AG04449 (cell line): ENCODE measurements at regions of chr6 and their contacts with region 1.

Region 1: GRCh38 chr6:27809939-27810767 is 102.0 kb downstream of the OR2B2 start:
- DNase-seq: peak; percentile 91
- H3K4me3 ChIP-seq: peak overlapping the region; percentile 85
- CTCF ChIP-seq: peak; percentile 29

Region 2: GRCh38 chr6:27687154-27688013 is 122.8 kb before region 1 on chr6:
- CTCF ChIA-PET with region 1: no interaction called
- POLR2A ChIA-PET with region 1: no interaction called
- DNase-seq: no peak
- H3K4me3 ChIP-seq: peak overlapping the region; percentile 77
- CTCF ChIP-seq: peak; percentile 84

Region 3: GRCh38 chr6:27825025-27825793 is 15.1 kb after region 1 on chr6:
- CTCF ChIA-PET with region 1: interaction called, 22 read pairs
- POLR2A ChIA-PET with region 1: interaction called, 12 read pairs
- DNase-seq: no peak
- H3K4me3 ChIP-seq: peak overlapping the region; percentile 66
- CTCF ChIP-seq: no peak

Region 4: DNA sequence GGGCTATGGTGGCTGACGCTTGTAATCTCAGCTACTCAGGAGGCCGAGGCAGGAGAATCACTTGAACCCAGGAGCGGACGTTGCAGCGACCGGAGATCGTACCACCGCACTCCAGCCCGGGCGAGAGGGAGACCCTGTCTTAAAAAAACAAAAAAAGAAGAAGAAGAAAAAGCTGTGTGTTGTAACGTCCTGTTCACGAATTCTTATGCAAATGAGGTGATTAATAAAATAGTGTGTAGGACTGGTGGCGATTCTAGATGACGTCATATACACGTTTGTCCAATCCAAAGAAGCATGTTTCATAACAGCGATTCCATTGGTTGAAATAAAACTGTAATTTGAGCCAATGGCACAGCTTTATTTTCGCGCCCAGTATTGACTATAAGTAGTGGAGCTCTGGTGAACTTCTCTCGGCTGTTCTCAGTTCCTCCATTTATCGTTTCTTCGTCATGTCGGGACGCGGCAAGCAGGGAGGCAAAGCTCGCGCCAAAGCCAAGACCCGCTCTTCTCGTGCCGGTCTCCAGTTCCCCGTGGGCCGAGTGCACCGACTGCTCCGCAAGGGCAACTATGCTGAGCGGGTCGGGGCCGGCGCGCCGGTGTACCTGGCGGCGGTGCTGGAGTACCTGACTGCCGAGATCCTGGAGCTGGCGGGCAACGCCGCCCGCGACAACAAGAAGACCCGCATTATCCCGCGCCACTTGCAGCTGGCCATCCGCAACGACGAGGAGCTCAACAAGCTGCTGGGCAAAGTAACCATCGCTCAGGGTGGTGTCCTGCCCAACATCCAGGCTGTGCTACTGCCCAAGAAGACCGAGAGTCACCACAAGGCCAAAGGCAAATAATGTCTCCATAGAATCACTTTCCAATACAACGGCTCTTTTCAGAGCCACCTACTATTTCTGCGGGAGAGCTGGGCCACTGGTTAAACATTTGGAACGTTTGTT is 55.0 kb after region 1 on chr6:
- CTCF ChIA-PET with region 1: no interaction called
- POLR2A ChIA-PET with region 1: interaction called, 42 read pairs
- DNase-seq: peak; percentile 89
- H3K4me3 ChIP-seq: peak overlapping the region; percentile 80
- CTCF ChIP-seq: no peak

Region 5: DNA sequence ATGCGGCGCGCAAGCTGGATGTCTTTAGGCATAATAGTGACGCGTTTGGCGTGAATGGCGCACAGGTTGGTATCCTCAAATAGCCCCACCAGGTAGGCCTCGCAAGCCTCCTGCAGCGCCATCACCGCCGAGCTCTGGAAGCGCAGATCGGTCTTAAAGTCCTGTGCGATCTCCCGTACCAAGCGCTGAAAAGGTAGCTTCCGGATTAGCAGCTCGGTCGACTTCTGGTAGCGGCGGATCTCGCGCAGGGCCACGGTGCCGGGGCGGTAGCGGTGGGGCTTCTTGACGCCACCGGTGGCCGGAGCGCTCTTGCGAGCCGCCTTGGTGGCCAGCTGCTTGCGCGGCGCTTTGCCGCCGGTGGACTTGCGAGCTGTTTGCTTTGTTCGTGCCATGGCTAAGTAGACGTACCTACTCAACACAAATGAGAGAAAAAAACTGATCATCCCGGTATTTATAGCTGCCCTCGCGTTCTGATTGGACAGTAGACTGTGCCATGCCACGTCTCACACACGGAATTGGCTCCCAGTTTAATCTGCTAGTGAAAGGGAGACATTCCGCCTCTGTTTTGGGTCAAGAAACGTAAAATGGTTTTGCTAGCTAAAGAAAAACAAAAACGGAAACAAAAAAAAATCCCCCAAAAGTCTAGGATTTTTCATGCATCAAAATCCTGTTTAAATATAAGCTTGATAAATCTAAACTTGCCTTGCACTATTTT is 61.9 kb after region 1 on chr6:
- CTCF ChIA-PET with region 1: interaction called, 4 read pairs
- POLR2A ChIA-PET with region 1: interaction called, 42 read pairs
- DNase-seq: peak; percentile 88
- H3K4me3 ChIP-seq: peak overlapping the region; percentile 66
- CTCF ChIP-seq: peak; percentile 36

Region 6: DNA sequence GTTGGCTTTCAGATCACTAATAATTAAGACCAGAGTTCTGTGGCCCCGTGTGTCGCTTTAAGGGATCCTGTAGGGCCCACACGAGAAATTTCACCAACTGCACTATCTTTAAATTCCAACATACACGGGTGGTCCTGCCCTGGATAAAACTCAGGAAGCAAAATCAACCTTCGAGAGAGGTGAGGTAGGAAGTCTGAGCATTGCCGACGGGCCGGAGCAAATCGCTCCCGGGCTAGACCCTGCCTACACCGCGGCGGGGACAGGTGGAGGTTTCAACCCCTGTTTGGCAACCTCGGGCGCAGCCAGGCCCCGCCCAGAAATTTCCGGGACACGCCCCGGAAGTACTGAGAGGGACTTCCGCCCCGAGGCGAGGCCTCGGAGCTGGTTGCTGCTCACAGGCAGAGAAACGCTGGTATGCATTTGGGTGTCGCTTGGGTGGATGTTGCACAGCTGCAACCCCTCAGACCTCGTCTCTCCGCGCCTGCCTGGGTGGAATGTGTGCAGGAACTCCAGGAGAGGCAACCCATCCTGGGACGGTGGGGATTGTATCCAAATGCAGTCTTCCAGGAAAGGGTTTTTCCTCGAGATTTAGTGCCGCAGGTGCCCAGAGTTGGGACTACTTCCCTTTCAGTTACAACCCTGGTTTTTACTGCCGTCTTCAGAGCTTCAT is 351.4 kb after region 1 on chr6:
- CTCF ChIA-PET with region 1: no interaction called
- POLR2A ChIA-PET with region 1: no interaction called
- DNase-seq: no peak
- H3K4me3 ChIP-seq: peak overlapping the region; percentile 69
- CTCF ChIP-seq: no peak